ENCODE measurements at regions of chrX and their contacts with region 1.

Region 1: DNA sequence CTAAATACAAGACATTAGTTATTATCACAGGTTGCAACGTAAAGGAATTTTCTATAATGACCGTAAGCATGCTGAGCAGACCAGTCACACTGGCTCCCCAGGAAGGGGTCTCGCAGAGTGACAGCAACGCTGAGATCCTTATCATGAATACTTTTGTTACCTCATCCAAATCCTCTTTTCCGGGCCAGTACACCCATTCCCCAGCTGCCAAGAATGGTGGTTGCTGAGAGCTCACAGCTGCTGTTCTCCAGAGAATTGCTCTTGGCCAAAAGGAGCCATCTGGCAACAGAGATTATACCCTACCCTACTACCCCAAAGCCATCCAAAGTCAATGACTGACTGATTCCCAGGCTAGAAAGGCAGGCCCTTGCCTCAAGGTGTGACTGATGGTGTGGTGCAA is 91.6 kb downstream of the FUNDC1 start:
- DNase-seq: no peak
- H3K4me3 ChIP-seq: no peak overlapping the region
- H3K4me3 Mint-ChIP-seq: no peak overlapping the region
- H3K27ac ChIP-seq: no peak overlapping the region
- H3K27ac Mint-ChIP-seq: no peak overlapping the region
- H3K4me1 ChIP-seq: no peaks in the 10 kb centered on the region
- H3K4me1 Mint-ChIP-seq: no peaks in the 10 kb centered on the region
- H3K27me3 ChIP-seq: no peaks in the 10 kb centered on the region
- H3K27me3 Mint-ChIP-seq: no peaks in the 10 kb centered on the region

Region 2: GRCh38 chrX:44415639-44416386 is 35.2 kb before region 1 on chrX:
- CTCF ChIA-PET with region 1: no interaction called
- POLR2A ChIA-PET with region 1: no interaction called
- intact Hi-C with region 1: loop called (anchors 2 kb)
- DNase-seq: no peak
- H3K4me3 ChIP-seq: no peak overlapping the region
- H3K4me3 Mint-ChIP-seq: no peak overlapping the region
- H3K27ac ChIP-seq: no peak overlapping the region
- H3K27ac Mint-ChIP-seq: no peak overlapping the region
- H3K4me1 ChIP-seq: no peaks in the 10 kb centered on the region
- H3K4me1 Mint-ChIP-seq: no peaks in the 10 kb centered on the region
- H3K27me3 ChIP-seq: no peaks in the 10 kb centered on the region
- H3K27me3 Mint-ChIP-seq: peaks cover 0 to 3% of the 10 kb centered on the region in 2 donors

Measured in CD4-positive, alpha-beta memory T cell (primary cell).